ENCODE measurements at regions of chr3 and their contacts with region 1.

Region 1: GRCh38 chr3:189961525-189962161 is 159.1 kb downstream of the P3H2 start:
- DNase-seq: peak; percentile 70 to 81
- H3K4me3 ChIP-seq: no peak overlapping the region
- H3K27ac ChIP-seq: no peak overlapping the region
- H3K4me1 ChIP-seq: no peaks in the 10 kb centered on the region
- H3K27me3 ChIP-seq: no peaks in the 10 kb centered on the region
- CTCF ChIP-seq: peak; percentile 70 to 93 (median 88)
- POLR2A ChIP-seq: no peak

Region 2: DNA sequence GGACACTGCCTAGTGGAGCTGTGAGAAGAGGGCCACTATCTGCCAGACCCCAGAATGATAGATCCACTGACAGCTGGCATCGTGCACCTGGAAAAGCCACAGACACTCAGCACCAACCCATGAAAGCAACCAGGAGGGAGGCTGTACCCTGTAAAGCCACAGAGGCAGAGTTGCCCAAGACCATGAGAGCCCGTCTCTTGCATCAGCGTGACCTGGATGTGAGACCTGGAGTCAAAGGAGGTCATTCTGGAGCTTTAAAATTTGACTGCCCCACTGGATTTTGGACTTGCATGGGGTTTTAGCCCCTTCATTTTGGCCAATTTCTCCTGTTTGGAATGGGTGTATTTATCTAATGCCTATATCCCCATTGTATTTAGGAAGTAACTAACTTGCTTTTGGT is 242.6 kb after region 1 on chr3:
- intact Hi-C with region 1: loop called (anchors 5 kb)
- DNase-seq: no peak
- H3K4me3 ChIP-seq: no peak overlapping the region
- H3K27ac ChIP-seq: no peak overlapping the region
- H3K4me1 ChIP-seq: no peaks in the 10 kb centered on the region
- H3K27me3 ChIP-seq: no peaks in the 10 kb centered on the region
- CTCF ChIP-seq: no peak
- POLR2A ChIP-seq: no peak

Region 3: GRCh38 chr3:190321789-190322603 is 360.4 kb after region 1 on chr3 and contains the start of gene CLDN1:
- intact Hi-C with region 1: loop called (anchors 10 kb)
- DNase-seq: peak; percentile 82 to 89
- H3K4me3 ChIP-seq: peak within 1 kb of the TSS; percentile 48 to 67 (median 61)
- H3K27ac ChIP-seq: peak within 1 kb of the TSS in 1 of 3 donors; percentile 58
- H3K4me1 ChIP-seq: peaks cover 4 to 15% of the 10 kb centered on the region in 2 donors
- H3K27me3 ChIP-seq: no peaks in the 10 kb centered on the region
- CTCF ChIP-seq: peak; percentile 61 to 99 (median 93)
- POLR2A ChIP-seq: peak in 1 of 2 donors; percentile 71
- total RNA-seq, gene CLDN1: 5.1 to 29.2 (median 8.5) TPM

Region 4: DNA sequence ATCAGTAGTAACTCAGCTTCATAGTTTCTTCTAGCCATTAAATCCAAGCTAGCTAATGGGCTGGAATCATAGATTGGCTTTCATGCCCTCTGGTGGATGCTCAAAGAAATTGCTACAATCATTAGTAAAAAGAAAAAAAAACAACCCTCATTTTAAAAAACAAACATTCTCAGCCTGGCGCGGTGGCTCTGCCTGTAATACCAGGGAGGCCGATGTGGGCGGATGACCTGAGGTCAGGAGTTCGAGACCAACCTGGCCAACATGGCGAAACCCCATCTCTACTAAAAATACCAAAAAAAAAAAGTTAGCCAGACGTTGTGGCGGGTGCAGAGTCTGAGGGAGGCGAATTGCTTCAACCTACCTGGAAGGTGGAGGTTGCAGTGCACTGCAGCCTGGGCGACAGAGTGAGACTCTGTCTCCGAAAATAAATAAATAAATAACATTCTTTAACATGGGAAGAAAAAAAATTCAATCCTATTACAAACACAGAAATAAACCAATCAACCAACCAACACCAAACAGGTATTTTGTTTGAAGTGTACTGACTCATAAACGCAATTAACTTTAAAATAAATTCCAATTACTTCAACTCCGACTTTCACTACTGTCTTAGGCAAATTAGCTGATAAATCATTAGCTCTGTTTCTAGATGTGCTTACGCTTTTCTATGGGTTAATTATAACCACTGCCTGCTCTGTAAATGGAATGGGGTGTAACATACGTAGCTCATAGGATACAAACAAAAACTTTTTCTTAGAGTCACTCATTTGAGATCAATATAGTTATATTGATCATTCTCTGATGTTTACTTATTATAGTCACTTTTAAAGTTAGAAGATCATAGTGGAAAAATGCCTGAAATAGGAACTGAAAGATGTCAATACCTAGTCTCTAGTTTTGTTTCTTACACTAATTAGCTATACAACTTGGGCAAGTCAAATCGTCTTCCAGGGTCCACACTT is 463.1 kb after region 1 on chr3:
- intact Hi-C with region 1: loop called (anchors 10 kb)
- DNase-seq: peak; percentile 58 to 65
- H3K4me3 ChIP-seq: no peak overlapping the region
- H3K27ac ChIP-seq: no peak overlapping the region
- H3K4me1 ChIP-seq: no peaks in the 10 kb centered on the region
- H3K27me3 ChIP-seq: no peaks in the 10 kb centered on the region
- CTCF ChIP-seq: peak; percentile 42 to 93 (median 68)
- POLR2A ChIP-seq: no peak

Region 5: GRCh38 chr3:191369616-191370010 is 1408.0 kb after region 1 on chr3:
- intact Hi-C with region 1: no loop called
- DNase-seq: no peak
- H3K4me3 ChIP-seq: no peak overlapping the region
- H3K27ac ChIP-seq: no peak overlapping the region
- H3K4me1 ChIP-seq: peaks cover 0 to 8% of the 10 kb centered on the region in 2 donors
- H3K27me3 ChIP-seq: no peaks in the 10 kb centered on the region
- CTCF ChIP-seq: no peak
- POLR2A ChIP-seq: no peak